Activated CD4-positive, alpha-beta T cell treated with anti-CD3 and anti-CD28 coated beads for 36 hours (primary cell): ENCODE measurements at regions of chr6 and their contacts with region 1.

Region 1: GRCh38 chr6:42563697-42564505 is at the start of gene UBR2:
- DNase-seq: peak; percentile 97
- ATAC-seq: peak; percentile 97
- H3K4me3 Mint-ChIP-seq: peak within 1 kb of the TSS; percentile 97
- H3K27ac Mint-ChIP-seq: peak within 1 kb of the TSS; percentile 95
- H3K4me1 Mint-ChIP-seq: peaks cover 31% of the 10 kb centered on the region
- H3K27me3 Mint-ChIP-seq: no peaks in the 10 kb centered on the region
- total RNA-seq, gene UBR2: 23.9 to 28.1 TPM

Region 2: DNA sequence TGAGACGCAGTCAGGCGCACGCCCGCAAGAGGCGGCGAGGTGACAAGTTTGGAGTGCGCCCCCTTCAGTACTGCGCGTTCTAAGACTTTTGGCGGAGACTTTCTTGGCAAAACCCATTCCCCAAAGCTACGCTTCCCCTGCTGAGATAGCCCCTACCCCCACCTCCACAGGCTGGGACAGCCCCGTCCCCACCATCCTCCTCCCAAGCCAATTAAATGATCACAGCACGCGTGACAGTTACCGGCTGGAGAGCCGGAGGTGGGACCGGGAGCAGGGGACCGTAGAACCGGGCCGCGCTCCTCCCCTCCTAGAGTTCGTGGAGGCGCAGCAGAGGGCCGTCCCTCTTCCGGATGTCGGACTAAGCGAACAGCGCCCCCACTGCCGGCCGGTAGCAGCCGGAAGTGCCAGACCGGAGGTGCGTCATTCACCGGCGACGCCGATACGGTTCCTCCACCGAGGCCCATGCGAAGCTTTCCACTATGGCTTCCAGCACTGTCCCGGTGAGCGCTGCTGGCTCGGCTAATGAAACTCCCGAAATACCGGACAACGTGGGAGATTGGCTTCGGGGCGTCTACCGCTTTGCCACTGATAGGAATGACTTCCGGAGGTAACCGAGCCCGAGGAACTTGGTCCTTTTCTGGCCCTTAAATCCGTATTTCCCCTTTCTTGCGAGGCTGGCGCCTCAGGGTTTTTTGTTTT is 776.5 kb before region 1 on chr6 and contains the start of gene TOMM6:
- CTCF ChIA-PET with region 1: interaction called, 3 read pairs
- POLR2A ChIA-PET with region 1: no interaction called
- intact Hi-C with region 1: loop called (anchors 1 to 10 kb)
- DNase-seq: peak; percentile 98
- ATAC-seq: peak; percentile 86
- H3K4me3 Mint-ChIP-seq: peak within 1 kb of the TSS; percentile 96
- H3K27ac Mint-ChIP-seq: peak within 1 kb of the TSS; percentile 98
- H3K4me1 Mint-ChIP-seq: peaks cover 19% of the 10 kb centered on the region
- H3K27me3 Mint-ChIP-seq: peaks cover 2% of the 10 kb centered on the region
- total RNA-seq, gene TOMM6: 282 to 345 TPM

Region 3: GRCh38 chr6:42050266-42051032 is 513.5 kb before region 1 on chr6 and contains the start of gene TAF8:
- CTCF ChIA-PET with region 1: no interaction called
- POLR2A ChIA-PET with region 1: interaction called, 3 read pairs
- intact Hi-C with region 1: loop called in 1 of 2 experiments (anchors 1 kb)
- DNase-seq: peak; percentile 94
- ATAC-seq: peak; percentile 76
- H3K4me3 Mint-ChIP-seq: peak within 1 kb of the TSS; percentile 88
- H3K27ac Mint-ChIP-seq: peak within 1 kb of the TSS; percentile 96
- H3K4me1 Mint-ChIP-seq: peaks cover 64% of the 10 kb centered on the region
- H3K27me3 Mint-ChIP-seq: no peaks in the 10 kb centered on the region
- total RNA-seq, gene TAF8: 52.3 to 53.1 TPM

Region 4: GRCh38 chr6:42661540-42662153 is 97.7 kb after region 1 on chr6:
- CTCF ChIA-PET with region 1: no interaction called
- POLR2A ChIA-PET with region 1: no interaction called
- intact Hi-C with region 1: no loop called
- DNase-seq: peak; percentile 90
- ATAC-seq: peak; percentile 91
- H3K4me3 Mint-ChIP-seq: no peak overlapping the region
- H3K27ac Mint-ChIP-seq: no peak overlapping the region
- H3K4me1 Mint-ChIP-seq: no peaks in the 10 kb centered on the region
- H3K27me3 Mint-ChIP-seq: no peaks in the 10 kb centered on the region

Region 5: DNA sequence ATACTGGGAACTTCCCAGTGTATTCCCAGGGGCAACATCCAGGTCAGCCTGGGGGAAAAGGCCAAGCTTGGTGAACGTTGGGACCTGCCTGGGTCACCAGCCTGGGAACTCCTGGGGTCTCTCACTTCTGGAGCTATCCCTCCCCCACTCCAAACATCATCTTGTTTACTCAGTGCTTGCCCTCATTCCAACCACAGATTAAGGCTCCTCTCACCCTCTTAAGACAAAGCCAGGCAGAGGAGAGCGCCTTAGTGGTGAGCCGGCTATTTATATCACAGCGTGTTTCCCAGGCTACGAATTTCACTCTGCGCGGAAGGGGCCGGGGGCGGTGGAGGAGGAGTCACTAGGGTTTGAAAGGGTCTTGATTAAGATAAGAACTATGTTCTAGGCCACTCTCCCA is 146.4 kb after region 1 on chr6:
- CTCF ChIA-PET with region 1: no interaction called
- POLR2A ChIA-PET with region 1: no interaction called
- intact Hi-C with region 1: no loop called
- DNase-seq: no peak
- ATAC-seq: no peak
- H3K4me3 Mint-ChIP-seq: no peak overlapping the region
- H3K27ac Mint-ChIP-seq: no peak overlapping the region
- H3K4me1 Mint-ChIP-seq: no peaks in the 10 kb centered on the region
- H3K27me3 Mint-ChIP-seq: peaks cover 2% of the 10 kb centered on the region

Region 6: DNA sequence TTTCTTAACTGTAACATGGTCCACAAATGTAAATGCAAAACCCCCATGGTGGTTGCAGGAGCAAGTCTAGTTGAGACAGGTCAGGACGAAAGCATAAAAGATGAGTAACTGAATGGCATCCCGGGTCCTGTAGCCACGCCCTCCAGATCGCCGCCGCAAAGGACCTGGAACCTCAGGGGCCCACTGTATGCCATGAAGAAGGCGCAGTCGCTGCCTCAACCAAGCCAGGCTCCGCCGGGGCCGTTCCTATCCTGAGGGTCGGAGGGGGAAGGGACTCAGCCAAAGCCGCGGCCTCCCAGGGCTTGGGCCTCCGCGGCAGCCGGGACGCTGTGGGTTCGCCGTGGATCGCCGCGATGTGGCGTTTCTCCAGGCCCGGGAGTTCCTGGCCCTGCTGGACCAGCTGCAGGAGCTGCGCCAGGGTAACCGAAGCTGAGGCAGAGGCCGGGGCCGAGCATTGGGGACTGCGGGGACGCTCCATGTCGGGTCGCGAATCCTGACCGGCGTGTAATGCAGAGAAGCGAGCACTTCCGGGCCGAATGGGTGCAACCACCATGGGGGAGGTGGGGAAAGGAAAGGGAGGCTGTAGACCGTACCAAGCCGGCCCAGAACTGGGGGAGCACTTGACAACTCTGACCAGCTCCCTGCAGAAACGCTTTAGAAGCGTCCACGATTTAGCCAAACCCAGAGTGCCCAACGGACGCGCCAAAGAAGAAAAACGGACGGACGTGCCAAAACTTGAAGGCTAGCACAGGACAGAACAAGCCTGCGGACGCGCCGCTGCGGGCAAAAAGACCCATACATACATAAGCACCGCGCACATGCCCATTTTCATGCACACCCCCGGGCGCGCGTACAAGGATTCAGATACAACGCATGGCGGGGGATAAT is 326.7 kb after region 1 on chr6:
- CTCF ChIA-PET with region 1: no interaction called
- POLR2A ChIA-PET with region 1: no interaction called
- intact Hi-C with region 1: loop called in 1 of 2 experiments (anchors 5 kb)
- DNase-seq: peak; percentile 95
- ATAC-seq: peak; percentile 89
- H3K4me3 Mint-ChIP-seq: peak overlapping the region; percentile 90
- H3K27ac Mint-ChIP-seq: peak overlapping the region; percentile 98
- H3K4me1 Mint-ChIP-seq: peaks cover 31% of the 10 kb centered on the region
- H3K27me3 Mint-ChIP-seq: no peaks in the 10 kb centered on the region

Region 7: DNA sequence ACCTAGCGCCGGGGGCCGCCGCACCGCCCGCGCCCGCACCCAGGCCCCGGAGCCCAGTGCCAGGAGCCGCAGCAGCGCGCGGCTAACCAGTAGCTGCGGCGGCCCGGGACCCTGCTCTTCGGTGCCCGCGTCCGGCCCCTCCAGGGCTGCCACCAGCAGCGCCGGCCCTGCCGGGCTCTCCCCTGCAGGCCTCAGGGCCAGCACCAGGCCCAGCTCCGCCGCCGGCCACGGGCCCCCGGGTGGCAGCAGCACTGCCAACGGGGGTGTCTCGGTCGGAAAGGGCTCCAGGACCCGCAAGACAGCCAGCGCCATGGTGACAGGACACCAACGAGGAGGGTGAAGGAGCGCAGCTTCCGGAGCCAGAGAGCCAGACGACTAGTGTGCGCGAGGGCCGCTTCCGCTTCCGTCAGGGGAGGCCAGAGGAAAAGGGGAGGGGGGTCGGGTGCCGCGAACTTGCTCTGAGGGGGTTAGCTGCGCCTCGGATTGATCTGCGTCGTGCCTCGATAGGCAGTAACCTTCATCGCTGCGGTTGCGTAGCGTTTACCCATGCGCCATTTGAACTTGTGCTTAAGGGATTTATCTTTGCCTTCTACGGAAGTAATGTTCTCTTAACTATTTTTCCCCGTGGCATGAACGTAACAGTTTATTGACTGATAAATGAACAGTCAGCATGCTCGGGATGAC is 415.1 kb after region 1 on chr6 and contains the start of gene PEX6:
- CTCF ChIA-PET with region 1: interaction called, 3 read pairs
- POLR2A ChIA-PET with region 1: no interaction called
- intact Hi-C with region 1: loop called in 1 of 2 experiments (anchors 5 kb)
- DNase-seq: peak; percentile 98
- ATAC-seq: peak; percentile 95
- H3K4me3 Mint-ChIP-seq: peak within 1 kb of the TSS; percentile 89
- H3K27ac Mint-ChIP-seq: peak within 1 kb of the TSS; percentile 95
- H3K4me1 Mint-ChIP-seq: peaks cover 45% of the 10 kb centered on the region
- H3K27me3 Mint-ChIP-seq: no peaks in the 10 kb centered on the region
- total RNA-seq, gene PEX6: 10.7 to 14.6 TPM